CD4-positive, alpha-beta memory T cell (primary cell): ENCODE measurements at regions of chr14 and their contacts with region 1.

Region 1: GRCh38 chr14:89618811-89619551 is 201.9 kb upstream of the FOXN3 start:
- DNase-seq: peak; percentile 75 to 84 (median 78)
- H3K4me3 ChIP-seq: peak overlapping the region; percentile 49 to 90
- H3K4me3 Mint-ChIP-seq: peak overlapping the region; percentile 94 to 99 (median 97)
- H3K27ac ChIP-seq: peak overlapping the region; percentile 80
- H3K27ac Mint-ChIP-seq: peak overlapping the region; percentile 91 to 98 (median 96)
- H3K4me1 ChIP-seq: peaks cover 60% of the 10 kb centered on the region
- H3K4me1 Mint-ChIP-seq: peaks cover 48 to 80% (median 63%) of the 10 kb centered on the region in 4 donors
- H3K27me3 ChIP-seq: no peaks in the 10 kb centered on the region
- H3K27me3 Mint-ChIP-seq: no peaks in the 10 kb centered on the region

Region 2: DNA sequence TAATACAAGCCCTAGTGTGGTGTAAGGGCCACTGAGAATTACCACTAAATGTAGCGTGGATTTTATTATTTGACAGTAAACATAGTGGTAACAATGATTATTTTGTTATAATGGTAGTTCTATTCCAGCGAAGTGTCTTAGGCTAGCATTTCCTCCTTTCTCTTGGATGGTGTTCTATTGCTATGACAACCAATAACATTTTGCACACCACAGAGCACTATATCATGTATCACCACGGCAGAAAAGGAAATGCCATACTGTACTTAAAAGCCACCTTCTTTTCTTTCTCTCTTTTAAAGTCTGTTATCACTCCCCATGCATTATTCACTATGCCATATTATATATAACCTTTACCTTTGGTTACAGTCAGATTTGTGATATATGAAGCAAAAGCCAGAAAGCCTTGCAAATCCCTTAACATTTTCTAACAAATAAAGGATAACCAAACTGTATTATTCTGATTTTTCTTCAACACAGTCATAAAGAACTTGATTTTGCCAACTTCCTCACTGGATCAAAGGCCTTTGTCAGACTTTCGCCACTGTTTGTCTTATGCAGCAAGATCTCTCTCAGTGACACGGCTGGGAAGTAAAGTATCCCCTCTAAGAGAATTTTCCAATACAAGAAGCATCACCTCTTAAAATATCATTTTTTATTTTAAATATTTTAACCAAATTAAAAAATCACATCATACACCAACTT is 397.7 kb before region 1 on chr14:
- CTCF ChIA-PET with region 1: no interaction called
- POLR2A ChIA-PET with region 1: no interaction called
- intact Hi-C with region 1: no loop called
- DNase-seq: peak in 4 of 5 donors; percentile 31 to 57 (median 48)
- H3K4me3 ChIP-seq: no peak overlapping the region
- H3K4me3 Mint-ChIP-seq: peak overlapping the region in 4 of 8 donors; percentile 10 to 53 (median 24)
- H3K27ac ChIP-seq: no peak overlapping the region
- H3K27ac Mint-ChIP-seq: peak overlapping the region; percentile 5 to 83 (median 55)
- H3K4me1 ChIP-seq: peaks cover 17% of the 10 kb centered on the region
- H3K4me1 Mint-ChIP-seq: peaks cover 41 to 64% (median 47%) of the 10 kb centered on the region in 4 donors
- H3K27me3 ChIP-seq: no peaks in the 10 kb centered on the region
- H3K27me3 Mint-ChIP-seq: no peaks in the 10 kb centered on the region

Region 3: DNA sequence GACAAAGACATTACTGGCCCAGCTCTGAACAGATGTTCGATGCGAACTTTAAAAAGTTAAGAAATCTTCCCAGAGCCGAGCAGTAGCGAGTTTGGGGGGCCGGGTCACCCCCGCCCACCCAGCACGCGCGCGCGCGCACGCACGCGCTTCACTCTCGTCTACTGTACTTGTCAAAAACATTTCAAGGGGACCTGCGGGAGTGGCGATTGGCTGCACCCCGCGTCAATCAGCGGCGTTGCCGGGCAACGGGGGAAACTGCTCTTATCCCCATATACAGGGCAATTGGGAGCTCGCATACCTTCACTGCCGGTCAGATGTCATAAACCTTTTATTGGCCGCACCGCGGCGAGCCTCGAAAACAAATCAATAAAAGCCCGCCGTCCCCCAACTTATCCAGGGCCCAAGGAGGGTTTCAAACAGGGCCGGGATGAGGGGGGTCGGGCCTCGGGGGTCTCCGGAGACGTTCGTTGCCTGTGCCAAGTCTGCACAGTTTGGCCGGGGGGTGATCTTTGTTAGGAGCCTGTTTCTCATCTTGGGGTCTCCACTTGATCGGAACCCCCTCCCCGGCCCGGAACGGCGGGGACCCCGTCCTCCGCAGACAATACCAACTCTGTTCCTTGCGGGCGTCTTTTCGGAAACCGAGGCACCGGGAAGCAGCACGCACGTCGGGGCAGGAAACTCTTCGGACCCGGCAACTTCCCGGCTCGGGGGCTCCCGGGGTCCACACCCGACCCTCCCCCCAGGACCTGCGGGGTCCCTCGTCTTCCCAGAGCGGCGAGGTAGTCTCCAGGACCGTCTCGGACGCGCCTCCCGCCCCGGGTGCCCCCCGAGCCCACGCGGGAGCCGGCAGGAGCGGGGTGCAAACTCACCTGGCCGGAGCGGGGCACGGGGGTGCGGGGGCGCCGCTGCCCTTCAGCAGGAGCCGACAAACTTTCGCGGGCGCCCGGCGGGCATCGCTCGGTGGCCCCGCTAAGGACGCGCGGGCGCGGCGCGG is 202.7 kb before region 1 on chr14:
- CTCF ChIA-PET with region 1: no interaction called
- POLR2A ChIA-PET with region 1: interaction called, 14 read pairs
- intact Hi-C with region 1: loop called (anchors 1 kb)
- DNase-seq: peak; percentile 96 to 99 (median 97)
- H3K4me3 ChIP-seq: peak overlapping the region; percentile 86
- H3K4me3 Mint-ChIP-seq: peak overlapping the region; percentile 88 to 98 (median 94)
- H3K27ac ChIP-seq: peak overlapping the region; percentile 65
- H3K27ac Mint-ChIP-seq: peak overlapping the region; percentile 93 to 99 (median 95)
- H3K4me1 ChIP-seq: peaks cover 22% of the 10 kb centered on the region
- H3K4me1 Mint-ChIP-seq: peaks cover 22 to 60% (median 41%) of the 10 kb centered on the region in 4 donors
- H3K27me3 ChIP-seq: no peaks in the 10 kb centered on the region
- H3K27me3 Mint-ChIP-seq: no peaks in the 10 kb centered on the region

Region 4: DNA sequence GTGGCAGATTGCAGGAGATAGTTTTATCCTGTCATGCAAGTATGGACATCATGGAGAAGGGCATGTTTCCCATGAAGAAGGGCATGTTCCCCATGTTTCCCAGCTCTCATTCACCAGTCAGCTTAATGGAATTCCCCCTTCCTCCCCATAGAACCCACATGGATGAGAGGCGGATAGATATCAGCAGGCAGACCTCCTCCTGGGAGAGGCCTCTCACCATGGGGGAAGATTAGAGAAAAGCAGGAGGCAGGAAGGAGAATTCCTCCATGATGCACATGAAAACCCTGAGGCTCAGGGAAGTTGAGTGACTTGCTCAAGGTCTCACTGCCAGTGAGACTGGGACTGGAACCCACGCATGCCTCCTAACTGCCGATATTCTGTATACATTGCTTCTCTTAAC is 109.1 kb before region 1 on chr14:
- CTCF ChIA-PET with region 1: no interaction called
- POLR2A ChIA-PET with region 1: interaction called, 8 read pairs
- intact Hi-C with region 1: loop called (anchors 10 kb)
- DNase-seq: no peak
- H3K4me3 ChIP-seq: no peak overlapping the region
- H3K4me3 Mint-ChIP-seq: peak overlapping the region in 7 of 8 donors; percentile 84 to 92 (median 89)
- H3K27ac ChIP-seq: peak overlapping the region; percentile 46
- H3K27ac Mint-ChIP-seq: peak overlapping the region; percentile 88 to 98 (median 96)
- H3K4me1 ChIP-seq: peaks cover 37% of the 10 kb centered on the region
- H3K4me1 Mint-ChIP-seq: peaks cover 38 to 70% (median 52%) of the 10 kb centered on the region in 4 donors
- H3K27me3 ChIP-seq: no peaks in the 10 kb centered on the region
- H3K27me3 Mint-ChIP-seq: no peaks in the 10 kb centered on the region

Region 5: DNA sequence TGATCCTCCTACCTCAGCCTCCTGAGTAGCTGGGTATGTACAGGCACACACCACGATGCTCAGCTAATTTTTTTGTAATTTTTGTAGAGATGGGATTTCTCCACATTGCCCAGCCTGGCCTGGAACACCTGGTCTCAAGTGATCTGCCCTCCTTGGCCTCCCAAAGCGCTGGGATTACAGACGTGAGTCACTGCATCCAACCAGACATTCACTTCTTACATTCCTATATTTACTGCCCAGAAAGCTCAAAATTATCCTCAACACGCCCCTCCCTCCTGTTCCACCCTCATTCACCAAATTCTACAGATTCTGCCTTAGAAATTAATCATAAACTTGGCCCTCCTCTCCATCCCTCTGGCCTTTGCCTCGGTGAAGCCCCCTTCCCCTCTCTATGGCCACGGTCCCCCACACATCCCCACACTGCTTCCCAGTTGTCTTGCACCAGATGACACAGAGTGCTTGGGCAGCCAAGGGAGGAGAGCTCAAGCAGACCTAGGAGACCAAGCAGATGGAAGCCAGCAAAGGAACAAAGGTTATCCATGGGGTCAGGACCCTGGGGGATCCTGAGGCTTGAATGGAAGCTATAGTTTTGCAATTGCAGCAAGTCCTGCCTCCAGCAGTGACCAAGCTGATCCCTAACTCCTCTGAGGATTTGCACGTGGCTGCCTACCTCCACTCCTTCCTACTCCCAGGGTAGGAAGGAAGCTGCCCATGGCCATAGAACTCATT is 11.3 kb after region 1 on chr14:
- CTCF ChIA-PET with region 1: interaction called, 3 read pairs
- POLR2A ChIA-PET with region 1: interaction called, 18 read pairs
- intact Hi-C with region 1: no loop called
- DNase-seq: no peak
- H3K4me3 ChIP-seq: no peak overlapping the region
- H3K4me3 Mint-ChIP-seq: peak overlapping the region in 3 of 8 donors; percentile 15 to 69 (median 46)
- H3K27ac ChIP-seq: no peak overlapping the region
- H3K27ac Mint-ChIP-seq: peak overlapping the region in 2 of 7 donors; percentile 32 to 62
- H3K4me1 ChIP-seq: peaks cover 34% of the 10 kb centered on the region
- H3K4me1 Mint-ChIP-seq: peaks cover 21 to 59% (median 38%) of the 10 kb centered on the region in 4 donors
- H3K27me3 ChIP-seq: no peaks in the 10 kb centered on the region
- H3K27me3 Mint-ChIP-seq: no peaks in the 10 kb centered on the region

Region 6: GRCh38 chr14:89658977-89659670 is 40.1 kb after region 1 on chr14:
- CTCF ChIA-PET with region 1: no interaction called
- POLR2A ChIA-PET with region 1: no interaction called
- intact Hi-C with region 1: loop called (anchors 5 kb)
- DNase-seq: no peak
- H3K4me3 ChIP-seq: no peak overlapping the region
- H3K4me3 Mint-ChIP-seq: peak overlapping the region in 1 of 8 donors; percentile 17
- H3K27ac ChIP-seq: no peak overlapping the region
- H3K27ac Mint-ChIP-seq: peak overlapping the region in 2 of 7 donors; percentile 5 to 69
- H3K4me1 ChIP-seq: no peaks in the 10 kb centered on the region
- H3K4me1 Mint-ChIP-seq: peaks cover 0 to 4% (median 1%) of the 10 kb centered on the region in 4 donors
- H3K27me3 ChIP-seq: no peaks in the 10 kb centered on the region
- H3K27me3 Mint-ChIP-seq: no peaks in the 10 kb centered on the region

Region 7: DNA sequence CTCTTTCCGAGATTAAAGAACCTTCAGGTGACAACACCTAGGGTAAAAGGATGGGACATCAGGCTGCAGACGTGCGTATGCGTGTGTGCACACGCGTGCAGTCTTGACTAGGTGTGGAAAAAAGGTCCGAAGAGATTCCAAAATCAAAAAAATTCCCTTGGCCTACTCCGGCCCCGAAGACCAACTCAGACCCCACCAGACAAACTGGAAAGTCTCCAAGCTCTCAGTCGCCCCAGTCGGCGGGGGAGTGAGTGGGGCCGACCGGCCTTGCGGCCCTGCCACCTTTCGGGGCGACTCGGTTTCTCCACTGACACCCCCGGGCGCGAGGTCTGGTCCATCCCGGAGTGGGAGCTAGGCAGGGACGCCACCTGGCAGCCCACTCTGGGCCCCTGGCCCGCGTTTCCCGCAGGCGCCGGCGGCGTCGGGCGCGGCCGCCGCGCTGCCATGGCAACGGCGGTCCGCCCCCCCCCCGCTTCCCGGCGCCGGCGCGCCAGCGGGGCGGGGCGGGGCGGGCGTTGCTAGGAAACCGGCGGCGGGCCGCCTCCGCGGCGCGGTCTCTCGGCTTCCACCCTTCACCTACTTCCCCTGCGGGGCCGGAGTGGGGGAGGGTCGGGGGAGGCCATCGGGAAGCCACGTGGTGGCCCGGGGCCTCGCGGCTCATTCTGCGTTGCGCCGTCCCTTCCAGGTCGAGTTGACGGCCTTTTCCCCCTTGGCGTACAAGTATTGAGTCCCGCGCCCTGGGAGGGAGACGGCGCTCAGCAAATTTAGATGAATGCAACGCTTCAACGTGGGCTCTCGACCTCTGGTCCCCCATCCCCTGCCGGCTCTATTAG is 82.4 kb after region 1 on chr14:
- CTCF ChIA-PET with region 1: interaction called, 5 read pairs
- POLR2A ChIA-PET with region 1: interaction called, 9 read pairs
- intact Hi-C with region 1: loop called (anchors 1 kb)
- DNase-seq: peak; percentile 79 to 86 (median 80)
- H3K4me3 ChIP-seq: peak overlapping the region; percentile 49 to 59
- H3K4me3 Mint-ChIP-seq: peak overlapping the region; percentile 78 to 90 (median 82)
- H3K27ac ChIP-seq: peak overlapping the region; percentile 54
- H3K27ac Mint-ChIP-seq: peak overlapping the region; percentile 80 to 98 (median 93)
- H3K4me1 ChIP-seq: peaks cover 27% of the 10 kb centered on the region
- H3K4me1 Mint-ChIP-seq: peaks cover 20 to 45% (median 33%) of the 10 kb centered on the region in 4 donors
- H3K27me3 ChIP-seq: no peaks in the 10 kb centered on the region
- H3K27me3 Mint-ChIP-seq: no peaks in the 10 kb centered on the region

Region 8: GRCh38 chr14:90396341-90397339 is 777.7 kb after region 1 on chr14 and contains the start of gene CALM1:
- CTCF ChIA-PET with region 1: no interaction called
- POLR2A ChIA-PET with region 1: no interaction called
- intact Hi-C with region 1: no loop called
- DNase-seq: peak; percentile 92 to 96 (median 94)
- H3K4me3 ChIP-seq: peak within 1 kb of the TSS; percentile 88 to 93
- H3K4me3 Mint-ChIP-seq: peak within 1 kb of the TSS; percentile 90 to 99 (median 96)
- H3K27ac ChIP-seq: peak within 1 kb of the TSS; percentile 68
- H3K27ac Mint-ChIP-seq: peak within 1 kb of the TSS; percentile 92 to 96 (median 95)
- H3K4me1 ChIP-seq: peaks cover 35% of the 10 kb centered on the region
- H3K4me1 Mint-ChIP-seq: peaks cover 16 to 40% (median 28%) of the 10 kb centered on the region in 4 donors
- H3K27me3 ChIP-seq: no peaks in the 10 kb centered on the region
- H3K27me3 Mint-ChIP-seq: peaks cover 0 to 5% of the 10 kb centered on the region in 2 donors
- total RNA-seq, gene CALM1: 693 to 698 TPM